Heart right ventricle (tissue), 16 donors: ENCODE measurements at regions of chr12 and their contacts with region 1.

Region 1: GRCh38 chr12:64181504-64182291 is 40.4 kb downstream of the KICS2 start:
- DNase-seq: peak in 1 of 2 donors; percentile 58
- ATAC-seq: peak; percentile 84 to 94 (median 87)
- H3K4me3 ChIP-seq: peak overlapping the region in 1 of 10 donors; percentile 6
- H3K27ac ChIP-seq: peak overlapping the region in 6 of 10 donors; percentile 15 to 78 (median 43)
- H3K4me1 ChIP-seq: peaks cover 0 to 36% (median 12%) of the 10 kb centered on the region in 9 donors
- H3K27me3 ChIP-seq: no peaks in the 10 kb centered on the region
- CTCF ChIP-seq: peak in 8 of 9 donors; percentile 49 to 84 (median 70)

Region 2: GRCh38 chr12:64083285-64084210 is 98.2 kb before region 1 on chr12:
- intact Hi-C with region 1: loop called in 1 of 10 experiments (anchors 5 kb)
- DNase-seq: peak; percentile 28 to 87
- ATAC-seq: peak; percentile 88 to 92 (median 90)
- H3K4me3 ChIP-seq: no peak overlapping the region
- H3K27ac ChIP-seq: peak overlapping the region in 9 of 10 donors; percentile 50 to 88 (median 73)
- H3K4me1 ChIP-seq: peaks cover 2 to 49% (median 37%) of the 10 kb centered on the region in 9 donors
- H3K27me3 ChIP-seq: no peaks in the 10 kb centered on the region
- CTCF ChIP-seq: no peak

Region 3: GRCh38 chr12:64236549-64236948 is 54.9 kb after region 1 on chr12:
- intact Hi-C with region 1: loop called in 1 of 10 experiments (anchors 10 kb)
- DNase-seq: no peak
- ATAC-seq: no peak
- H3K4me3 ChIP-seq: no peak overlapping the region
- H3K27ac ChIP-seq: no peak overlapping the region
- H3K4me1 ChIP-seq: peaks cover 0 to 11% (median 4%) of the 10 kb centered on the region in 9 donors
- H3K27me3 ChIP-seq: no peaks in the 10 kb centered on the region
- CTCF ChIP-seq: peak in 1 of 9 donors; percentile 15